HEK293 (cell line): ENCODE measurements at regions of chr1 and their contacts with region 1.

Region 1: GRCh38 chr1:171943973-171944561 is 102.8 kb downstream of the DNM3 start:
- H3K4me3 ChIP-seq: no peak overlapping the region
- H3K27ac ChIP-seq: no peak overlapping the region
- H3K4me1 ChIP-seq: no peaks in the 10 kb centered on the region
- CTCF ChIP-seq: no peak

Region 2: DNA sequence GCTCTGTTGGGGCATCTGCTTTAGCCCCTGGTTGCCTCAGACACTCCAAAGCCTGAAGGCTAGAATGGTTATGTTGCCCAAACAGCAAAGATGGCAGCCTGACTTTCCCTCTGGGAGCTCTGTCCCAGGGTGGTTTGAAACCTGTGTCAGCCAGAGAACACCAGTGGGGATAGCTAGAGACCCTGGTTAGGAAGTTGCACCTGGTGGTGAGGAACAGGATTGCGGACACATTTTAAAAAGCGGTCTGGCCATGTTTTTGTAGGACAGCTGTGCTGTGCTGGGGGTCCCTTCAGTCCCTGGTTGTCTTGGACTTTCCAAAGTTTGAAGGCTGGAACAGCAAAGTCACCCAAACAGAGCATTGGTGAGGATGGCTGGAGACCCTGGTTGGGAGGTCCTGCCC is 14.9 kb before region 1 on chr1:
- CTCF ChIA-PET with region 1: interaction called, 10 read pairs
- POLR2A ChIA-PET with region 1: no interaction called
- H3K4me3 ChIP-seq: no peak overlapping the region
- H3K27ac ChIP-seq: no peak overlapping the region
- H3K4me1 ChIP-seq: no peaks in the 10 kb centered on the region
- CTCF ChIP-seq: no peak

Region 3: GRCh38 chr1:171961861-171962260 is 17.8 kb after region 1 on chr1:
- CTCF ChIA-PET with region 1: no interaction called
- POLR2A ChIA-PET with region 1: no interaction called
- H3K4me3 ChIP-seq: no peak overlapping the region
- H3K27ac ChIP-seq: no peak overlapping the region
- H3K4me1 ChIP-seq: no peaks in the 10 kb centered on the region
- CTCF ChIP-seq: no peak

Region 4: DNA sequence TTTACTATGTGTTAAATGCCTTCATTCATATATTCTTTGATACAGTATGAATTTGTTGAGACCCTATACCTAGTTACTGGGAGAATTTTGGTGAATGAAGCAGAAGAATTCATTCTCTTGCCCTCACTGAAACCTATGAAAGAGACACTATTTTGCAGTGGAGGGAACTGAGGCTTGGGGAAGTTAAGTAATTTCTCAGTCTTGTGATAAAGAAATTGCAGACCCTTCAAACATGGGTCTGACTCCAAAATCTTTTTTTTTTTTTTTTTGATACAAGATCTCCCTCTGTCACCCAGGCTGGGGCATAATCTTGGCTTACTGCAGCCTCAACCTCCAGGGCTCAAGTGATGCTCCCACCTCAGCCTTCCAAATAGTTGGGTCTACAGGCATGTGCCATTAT is 29.4 kb after region 1 on chr1:
- CTCF ChIA-PET with region 1: no interaction called
- POLR2A ChIA-PET with region 1: no interaction called
- H3K4me3 ChIP-seq: no peak overlapping the region
- H3K27ac ChIP-seq: no peak overlapping the region
- H3K4me1 ChIP-seq: no peaks in the 10 kb centered on the region; the same call in 1 of the 2 replicates
- CTCF ChIP-seq: no peak